ENCODE measurements at regions of chr2 and their contacts with region 1.

Region 1: DNA sequence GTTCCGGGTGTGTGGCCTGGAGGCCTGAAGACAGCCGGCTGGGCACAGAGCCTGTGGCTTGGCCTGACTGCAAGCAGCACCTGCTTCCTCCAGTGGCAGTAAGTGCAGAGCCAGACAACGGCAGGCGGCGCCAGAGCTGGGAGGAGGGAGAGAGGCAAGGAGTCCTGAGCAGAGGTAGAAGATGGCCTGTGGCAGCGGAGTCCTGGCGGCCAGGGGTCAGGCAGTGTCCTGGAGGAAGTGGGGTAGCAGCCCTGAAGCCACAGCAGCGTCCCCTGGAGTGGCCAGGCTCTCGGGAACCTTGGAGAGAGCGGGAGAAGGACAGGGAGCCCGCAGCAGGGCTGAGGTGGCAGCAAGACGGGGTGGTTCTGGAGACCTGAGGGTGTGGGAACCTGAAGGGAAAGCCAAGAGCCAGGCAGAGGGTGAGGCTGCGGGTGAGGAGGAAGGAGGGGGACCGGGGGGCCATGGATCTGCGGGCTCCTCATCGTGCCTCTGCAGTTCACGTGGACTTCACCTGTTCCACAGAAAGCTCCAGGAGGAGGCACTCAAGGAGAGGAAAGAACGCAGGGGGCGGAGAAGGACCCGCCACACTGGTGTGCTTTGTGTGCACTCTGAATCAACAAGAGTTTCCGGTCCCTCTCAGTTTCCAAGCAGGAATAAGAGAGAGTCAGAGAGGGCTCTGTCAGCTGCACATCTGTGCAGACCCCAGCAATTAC is 85.9 kb downstream of the USP40 start:
- DNase-seq: peak; percentile 71
- H3K4me3 ChIP-seq: no peak overlapping the region
- H3K27ac ChIP-seq: no peak overlapping the region
- H3K4me1 ChIP-seq: no peaks in the 10 kb centered on the region
- CTCF ChIP-seq: peak; percentile 63

Region 2: GRCh38 chr2:233638836-233639235 is 158.2 kb after region 1 on chr2:
- CTCF ChIA-PET with region 1: no interaction called
- POLR2A ChIA-PET with region 1: no interaction called
- intact Hi-C with region 1: loop called (anchors 10 kb)
- DNase-seq: peak; percentile 47
- H3K4me3 ChIP-seq: no peak overlapping the region
- H3K27ac ChIP-seq: no peak overlapping the region
- H3K4me1 ChIP-seq: no peaks in the 10 kb centered on the region
- CTCF ChIP-seq: peak; percentile 60; the same call in 1 of the 2 replicates

Region 3: GRCh38 chr2:233711312-233712008 is 230.8 kb after region 1 on chr2:
- CTCF ChIA-PET with region 1: no interaction called
- POLR2A ChIA-PET with region 1: no interaction called
- intact Hi-C with region 1: loop called (anchors 1 kb)
- DNase-seq: peak; percentile 71
- H3K4me3 ChIP-seq: no peak overlapping the region
- H3K27ac ChIP-seq: no peak overlapping the region
- H3K4me1 ChIP-seq: no peaks in the 10 kb centered on the region
- CTCF ChIP-seq: peak; percentile 94

Region 4: DNA sequence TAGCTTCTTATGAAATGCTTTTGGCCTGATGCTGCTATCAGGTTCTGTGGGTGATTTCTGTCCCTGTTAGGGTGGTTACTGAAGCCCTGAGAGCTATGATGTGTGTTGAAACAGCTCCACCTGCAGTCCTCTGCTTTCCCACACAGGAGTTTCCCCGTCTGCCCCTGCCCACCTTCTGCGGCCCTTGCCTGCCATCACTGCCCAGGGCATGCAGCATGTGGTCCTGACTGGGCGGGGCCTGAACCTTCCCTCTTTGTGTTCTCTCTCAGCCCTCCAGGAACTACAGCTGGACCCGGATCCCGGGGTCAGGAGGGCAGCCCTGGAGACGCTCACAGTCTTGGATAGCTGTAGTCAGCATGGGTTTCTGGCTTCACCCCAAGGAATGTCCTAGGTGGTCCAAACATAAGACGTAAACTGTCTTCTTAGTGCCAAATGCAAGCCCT is 352.2 kb after region 1 on chr2:
- CTCF ChIA-PET with region 1: no interaction called
- POLR2A ChIA-PET with region 1: no interaction called
- intact Hi-C with region 1: loop called (anchors 10 kb)
- DNase-seq: peak; percentile 38
- H3K4me3 ChIP-seq: no peak overlapping the region
- H3K27ac ChIP-seq: no peak overlapping the region
- H3K4me1 ChIP-seq: peaks cover 10% of the 10 kb centered on the region
- CTCF ChIP-seq: peak; percentile 60

Region 5: DNA sequence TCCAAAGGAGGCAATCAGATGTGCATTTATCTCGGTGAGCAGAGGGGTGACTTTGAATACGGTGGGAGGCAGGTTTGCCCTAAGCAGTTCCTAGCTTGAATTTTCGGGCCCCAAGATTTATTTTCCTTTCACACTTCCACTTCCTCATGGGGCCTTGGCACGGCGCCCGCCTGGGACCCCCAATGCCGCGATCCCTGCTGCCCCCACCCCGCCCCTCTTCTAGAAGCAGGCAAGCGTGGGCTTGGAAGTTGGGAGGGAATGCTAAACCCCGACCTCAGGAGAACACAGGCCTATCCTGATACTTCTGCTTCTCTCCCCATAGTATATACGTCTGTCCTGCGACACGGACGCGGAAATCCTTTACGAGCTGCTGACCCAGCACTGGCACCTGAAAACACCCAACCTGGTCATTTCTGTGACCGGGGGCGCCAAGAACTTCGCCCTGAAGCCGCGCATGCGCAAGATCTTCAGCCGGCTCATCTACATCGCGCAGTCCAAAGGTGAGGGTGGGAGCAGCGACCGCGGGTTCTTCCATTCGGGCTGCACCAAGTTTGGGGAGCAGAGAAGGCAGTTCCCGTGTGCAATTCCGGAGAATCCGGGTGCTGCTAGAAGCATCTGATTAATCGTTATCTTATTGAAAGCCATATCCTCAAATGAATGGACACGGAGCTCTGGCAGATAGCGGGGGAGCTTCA is 458.2 kb after region 1 on chr2:
- CTCF ChIA-PET with region 1: no interaction called
- POLR2A ChIA-PET with region 1: no interaction called
- intact Hi-C with region 1: no loop called
- DNase-seq: no peak
- H3K4me3 ChIP-seq: no peak overlapping the region
- H3K27ac ChIP-seq: no peak overlapping the region
- H3K4me1 ChIP-seq: no peaks in the 10 kb centered on the region
- CTCF ChIP-seq: no peak

Measured in OCI-LY7 (cell line).